Right cardiac atrium (tissue), 5 donors: ENCODE measurements at regions of chr14 and their contacts with region 1.

Region 1: DNA sequence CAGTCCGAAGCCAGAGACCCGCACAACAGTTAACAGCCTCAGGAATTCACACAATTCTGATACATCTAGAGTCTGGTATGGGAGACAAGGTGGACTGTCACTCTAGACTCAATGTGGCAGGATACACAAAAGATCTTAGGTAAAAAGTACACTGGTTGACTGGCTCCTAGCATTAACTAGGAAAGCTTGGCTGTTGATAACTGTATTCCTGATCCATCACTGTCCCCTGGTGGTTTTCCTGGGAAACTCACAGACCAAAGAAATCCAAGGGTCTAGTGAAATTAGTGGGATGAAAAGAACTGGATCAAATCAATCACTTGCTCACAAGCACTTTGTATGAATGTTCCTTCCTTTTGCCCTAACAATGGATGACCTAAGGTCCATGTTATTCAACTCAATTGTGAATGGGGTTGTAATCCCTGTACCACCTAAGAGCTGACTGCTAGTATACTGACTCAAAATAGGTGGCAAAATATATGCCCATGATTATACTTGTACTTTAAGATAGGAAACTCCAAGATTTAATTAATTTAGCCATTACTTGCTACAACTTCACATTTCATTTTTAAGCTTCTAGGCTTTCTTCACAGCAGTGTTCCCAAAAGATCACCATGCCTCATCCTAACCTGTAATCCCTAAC is 14.0 kb downstream of the NPC2 start:
- DNase-seq: no peak
- ATAC-seq: peak in 1 of 2 donors; percentile 47
- H3K4me3 ChIP-seq: no peak overlapping the region
- H3K27ac ChIP-seq: no peak overlapping the region
- H3K4me1 ChIP-seq: no peaks in the 10 kb centered on the region
- H3K27me3 ChIP-seq: no peaks in the 10 kb centered on the region

Region 2: GRCh38 chr14:74207947-74208346 is 271.2 kb before region 1 on chr14:
- intact Hi-C with region 1: no loop called
- DNase-seq: no peak
- ATAC-seq: no peak
- H3K4me3 ChIP-seq: no peak overlapping the region
- H3K27ac ChIP-seq: no peak overlapping the region
- H3K4me1 ChIP-seq: no peaks in the 10 kb centered on the region
- H3K27me3 ChIP-seq: no peaks in the 10 kb centered on the region

Region 3: DNA sequence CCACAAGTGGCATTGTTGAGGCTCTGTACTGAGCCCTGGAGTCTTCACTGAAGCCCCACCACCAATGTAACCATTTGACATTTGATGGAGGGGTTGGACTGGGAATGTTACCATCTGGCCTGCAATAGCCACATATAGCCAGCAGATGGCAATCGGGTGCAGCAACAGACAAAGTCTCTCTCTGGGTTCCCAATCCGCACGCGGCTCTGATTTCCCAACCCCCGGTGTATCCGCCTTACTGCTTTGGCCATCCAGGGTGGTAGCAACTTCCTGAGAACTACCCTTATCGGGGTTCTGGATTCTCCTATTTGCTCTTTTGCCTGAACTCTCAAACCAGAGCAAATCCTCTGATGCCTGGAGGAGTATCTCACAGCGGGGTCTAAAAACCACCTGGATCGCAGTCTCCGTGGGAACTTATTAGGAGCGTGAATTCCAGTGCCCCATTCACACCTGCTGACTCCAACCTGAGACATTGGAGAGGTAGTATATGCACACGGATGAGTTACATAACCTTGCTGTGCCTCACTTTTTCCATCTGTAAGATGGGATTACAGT is 116.7 kb before region 1 on chr14:
- intact Hi-C with region 1: loop called (anchors 5 kb)
- DNase-seq: peak; percentile 84 to 92 (median 90)
- ATAC-seq: peak; percentile 82 to 85
- H3K4me3 ChIP-seq: no peak overlapping the region
- H3K27ac ChIP-seq: no peak overlapping the region
- H3K4me1 ChIP-seq: no peaks in the 10 kb centered on the region
- H3K27me3 ChIP-seq: no peaks in the 10 kb centered on the region

Region 4: DNA sequence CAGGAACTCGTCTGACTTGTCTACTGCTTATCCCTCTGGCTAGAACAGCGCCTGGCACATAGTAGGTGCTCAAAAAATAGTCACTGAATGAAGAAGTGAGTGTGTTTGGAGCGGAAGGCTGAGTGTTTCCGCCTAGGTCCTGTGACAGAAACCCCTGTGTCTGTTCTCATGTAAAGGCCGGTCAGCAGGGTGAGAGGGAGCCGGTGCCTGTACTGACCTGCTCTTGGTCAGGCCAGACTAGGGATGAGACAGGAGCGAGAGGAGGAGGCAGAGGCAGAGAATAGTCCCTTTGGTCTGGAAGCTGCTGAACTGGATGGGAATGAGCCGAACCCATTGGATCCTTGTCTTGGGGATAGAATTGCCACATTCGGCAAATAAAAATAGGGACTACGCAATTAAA is 110.3 kb before region 1 on chr14:
- intact Hi-C with region 1: loop called (anchors 5 kb)
- DNase-seq: no peak
- ATAC-seq: no peak
- H3K4me3 ChIP-seq: no peak overlapping the region
- H3K27ac ChIP-seq: no peak overlapping the region
- H3K4me1 ChIP-seq: no peaks in the 10 kb centered on the region
- H3K27me3 ChIP-seq: no peaks in the 10 kb centered on the region